ENCODE measurements at regions of chr10 and their contacts with region 1.

Region 1: DNA sequence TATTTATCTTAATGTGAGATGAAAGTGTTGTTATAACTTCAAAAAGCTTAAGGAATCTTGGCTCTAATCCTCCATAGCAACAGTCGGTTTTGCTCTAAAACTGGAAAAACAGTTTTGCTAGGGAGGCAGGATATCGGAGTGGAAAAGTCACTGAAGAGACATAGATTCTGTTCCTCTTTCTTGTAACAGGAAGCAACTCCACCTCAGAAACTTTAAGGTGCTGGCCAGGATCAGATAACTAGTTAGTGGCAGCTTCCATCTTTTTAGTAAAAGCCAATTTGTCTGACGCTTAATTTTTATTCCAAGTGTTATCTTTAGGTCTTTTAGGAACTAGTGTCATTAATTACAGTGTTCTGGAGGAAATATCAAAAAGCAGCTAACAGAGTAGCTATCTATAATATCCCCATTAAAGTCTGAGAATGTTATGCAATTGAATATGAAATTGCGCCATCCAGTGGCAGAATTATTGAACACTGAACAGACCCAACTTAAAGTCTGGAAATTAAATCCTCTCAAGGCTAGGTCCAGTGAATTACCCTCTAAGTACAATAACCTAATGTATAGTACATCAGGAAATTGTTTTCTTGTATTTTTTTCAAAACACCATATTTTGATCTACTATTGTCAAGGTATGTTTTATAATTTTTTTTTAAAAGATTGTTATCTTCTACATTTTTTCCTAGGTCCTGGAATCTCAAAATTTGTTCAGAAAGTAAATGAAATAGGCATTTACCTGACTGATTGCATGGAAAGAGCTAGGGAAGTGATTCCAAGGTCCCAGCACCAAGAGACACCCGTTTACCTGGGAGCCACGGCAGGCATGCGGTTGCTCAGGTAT is 65.9 kb upstream of the CC2D2B start:
- DNase-seq: no peak
- ATAC-seq: peak; percentile 73

Region 2: GRCh38 chr10:95693668-95694534 is 148.0 kb before region 1 on chr10 and contains the start of gene TCTN3:
- intact Hi-C with region 1: loop called (anchors 5 kb)
- DNase-seq: peak; percentile 97
- ATAC-seq: peak; percentile 100
- total RNA-seq, gene TCTN3: 8.5 TPM

Region 3: DNA sequence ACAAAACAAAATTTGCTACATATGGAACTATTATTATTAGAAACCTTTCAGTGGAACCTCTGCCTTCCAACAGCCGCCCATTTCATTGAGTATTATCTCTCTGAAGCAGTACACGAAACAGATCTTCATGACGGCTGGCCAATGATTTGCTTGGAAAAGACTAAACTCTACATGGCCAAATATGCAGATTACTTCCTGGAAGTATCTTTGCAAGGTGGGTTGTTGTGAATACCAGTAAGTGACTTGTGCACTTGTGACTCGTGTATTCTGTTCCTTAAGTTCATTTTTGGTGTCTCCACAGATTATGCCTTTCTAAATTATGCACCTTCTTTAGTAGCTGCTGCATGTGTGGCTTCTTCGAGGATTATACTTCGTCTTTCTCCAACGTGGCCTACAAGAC is 214.9 kb after region 1 on chr10:
- intact Hi-C with region 1: no loop called
- DNase-seq: no peak
- ATAC-seq: no peak